ENCODE measurements at regions of chr16 and their contacts with region 1.

Region 1: DNA sequence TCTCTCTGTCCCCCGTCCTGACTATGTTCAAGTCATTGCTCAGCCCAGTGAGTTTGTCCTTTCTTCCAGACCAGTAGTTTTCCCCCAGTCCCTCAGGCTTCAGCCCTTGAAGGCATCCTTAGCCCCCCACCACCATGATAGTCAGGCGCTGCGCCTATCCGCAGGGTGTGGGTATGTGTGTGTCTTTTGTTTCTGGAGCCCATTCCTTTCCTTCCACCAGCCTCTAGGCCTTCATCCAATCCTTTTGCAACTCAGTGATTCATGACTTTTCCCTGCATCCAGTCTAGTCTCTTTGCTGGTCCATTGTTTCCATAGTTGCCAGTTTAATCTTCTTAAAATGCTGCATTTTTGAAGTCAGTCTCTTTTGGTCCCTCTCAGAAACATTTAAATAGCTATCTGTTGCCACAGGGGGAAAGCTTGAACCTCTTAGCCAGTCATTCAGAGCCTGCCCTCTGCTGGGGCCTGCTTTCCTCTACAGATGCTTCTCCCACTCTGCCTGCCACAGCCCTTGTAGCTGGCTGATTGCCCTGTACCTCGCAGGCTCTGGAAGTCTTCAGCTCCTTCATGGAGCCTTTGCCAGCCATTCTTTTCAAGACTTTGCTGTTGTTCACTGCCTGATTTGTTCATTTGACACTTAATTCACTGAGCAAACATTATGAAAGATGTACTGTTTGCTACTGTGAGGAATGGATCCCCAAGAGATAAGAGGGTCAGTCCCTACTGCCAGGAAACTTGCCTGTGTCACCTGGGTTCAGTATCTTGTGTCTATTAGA is 55.9 kb upstream of the ADCY7 start:
- DNase-seq: no peak
- ATAC-seq: peak; percentile 83
- H3K4me3 Mint-ChIP-seq: no peak overlapping the region
- H3K27ac Mint-ChIP-seq: peak overlapping the region; percentile 59
- H3K4me1 Mint-ChIP-seq: peaks cover 35% of the 10 kb centered on the region
- H3K27me3 Mint-ChIP-seq: no peaks in the 10 kb centered on the region
- CTCF ChIP-seq: no peak

Region 2: DNA sequence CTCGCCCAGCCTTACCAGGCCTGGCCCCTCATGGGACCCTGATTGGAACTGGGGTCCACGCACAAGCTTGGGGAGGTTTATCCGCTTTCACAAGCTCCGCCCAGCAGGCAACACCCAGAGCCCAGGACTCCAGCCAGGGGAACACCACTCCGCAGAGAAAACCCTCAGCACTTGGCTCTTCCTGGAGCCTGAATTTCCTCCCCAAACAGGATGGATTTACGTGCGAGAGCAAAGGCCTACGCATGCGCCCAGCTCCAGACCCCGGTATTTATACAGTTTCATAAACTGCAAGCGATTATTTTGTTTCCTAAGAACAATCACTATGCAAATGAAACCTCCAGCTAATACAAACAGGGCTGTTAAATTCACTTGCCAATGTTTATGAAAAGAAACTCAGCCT is 377.4 kb before region 1 on chr16:
- CTCF ChIA-PET with region 1: no interaction called
- POLR2A ChIA-PET with region 1: no interaction called
- intact Hi-C with region 1: no loop called
- DNase-seq: no peak
- ATAC-seq: no peak
- H3K4me3 Mint-ChIP-seq: no peak overlapping the region
- H3K27ac Mint-ChIP-seq: no peak overlapping the region
- H3K4me1 Mint-ChIP-seq: peaks cover 14% of the 10 kb centered on the region
- H3K27me3 Mint-ChIP-seq: peaks cover 18% of the 10 kb centered on the region
- CTCF ChIP-seq: no peak

Region 3: GRCh38 chr16:50024684-50025536 is 185.5 kb before region 1 on chr16 and contains the start of gene CNEP1R1:
- CTCF ChIA-PET with region 1: interaction called, 76 read pairs
- POLR2A ChIA-PET with region 1: interaction called, 10 read pairs
- intact Hi-C with region 1: loop called (anchors 1 kb)
- DNase-seq: peak; percentile 87
- ATAC-seq: peak; percentile 95
- H3K4me3 Mint-ChIP-seq: peak within 1 kb of the TSS; percentile 96
- H3K27ac Mint-ChIP-seq: peak within 1 kb of the TSS; percentile 83
- H3K4me1 Mint-ChIP-seq: peaks cover 19% of the 10 kb centered on the region
- H3K27me3 Mint-ChIP-seq: peaks cover 6% of the 10 kb centered on the region
- CTCF ChIP-seq: peak; percentile 82
- total RNA-seq, gene CNEP1R1: 22.1 and 31.0 TPM in 2 replicates

Region 4: DNA sequence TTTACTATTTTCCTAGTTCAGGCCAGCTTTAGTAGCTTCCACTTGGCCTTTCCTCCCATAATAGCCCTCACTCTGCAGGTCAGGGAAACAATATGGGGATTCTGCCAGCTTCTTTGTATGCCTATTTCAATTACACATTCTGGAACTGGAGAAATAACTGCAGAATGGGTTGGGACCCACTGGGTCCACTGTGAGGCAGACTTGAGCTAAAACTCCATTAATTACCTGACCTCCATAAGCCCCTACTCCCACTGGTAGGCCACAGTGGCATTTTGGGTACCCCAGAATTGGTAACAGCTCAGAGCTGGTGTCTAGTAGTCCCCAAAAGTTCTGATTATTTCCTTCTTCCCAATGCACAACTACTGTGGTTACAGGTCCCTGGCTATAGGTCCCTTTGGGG is 74.1 kb before region 1 on chr16:
- CTCF ChIA-PET with region 1: interaction called, 10 read pairs
- POLR2A ChIA-PET with region 1: no interaction called
- intact Hi-C with region 1: no loop called
- DNase-seq: no peak
- ATAC-seq: no peak
- H3K4me3 Mint-ChIP-seq: no peak overlapping the region
- H3K27ac Mint-ChIP-seq: no peak overlapping the region
- H3K4me1 Mint-ChIP-seq: no peaks in the 10 kb centered on the region
- H3K27me3 Mint-ChIP-seq: no peaks in the 10 kb centered on the region
- CTCF ChIP-seq: no peak

Region 5: GRCh38 chr16:50245417-50246298 is 35.2 kb after region 1 on chr16:
- CTCF ChIA-PET with region 1: no interaction called
- POLR2A ChIA-PET with region 1: no interaction called
- intact Hi-C with region 1: no loop called
- DNase-seq: peak; percentile 65
- ATAC-seq: peak; percentile 89
- H3K4me3 Mint-ChIP-seq: peak overlapping the region; percentile 77
- H3K27ac Mint-ChIP-seq: no peak overlapping the region
- H3K4me1 Mint-ChIP-seq: peaks cover 5% of the 10 kb centered on the region
- H3K27me3 Mint-ChIP-seq: peaks cover 3% of the 10 kb centered on the region
- CTCF ChIP-seq: no peak

Region 6: DNA sequence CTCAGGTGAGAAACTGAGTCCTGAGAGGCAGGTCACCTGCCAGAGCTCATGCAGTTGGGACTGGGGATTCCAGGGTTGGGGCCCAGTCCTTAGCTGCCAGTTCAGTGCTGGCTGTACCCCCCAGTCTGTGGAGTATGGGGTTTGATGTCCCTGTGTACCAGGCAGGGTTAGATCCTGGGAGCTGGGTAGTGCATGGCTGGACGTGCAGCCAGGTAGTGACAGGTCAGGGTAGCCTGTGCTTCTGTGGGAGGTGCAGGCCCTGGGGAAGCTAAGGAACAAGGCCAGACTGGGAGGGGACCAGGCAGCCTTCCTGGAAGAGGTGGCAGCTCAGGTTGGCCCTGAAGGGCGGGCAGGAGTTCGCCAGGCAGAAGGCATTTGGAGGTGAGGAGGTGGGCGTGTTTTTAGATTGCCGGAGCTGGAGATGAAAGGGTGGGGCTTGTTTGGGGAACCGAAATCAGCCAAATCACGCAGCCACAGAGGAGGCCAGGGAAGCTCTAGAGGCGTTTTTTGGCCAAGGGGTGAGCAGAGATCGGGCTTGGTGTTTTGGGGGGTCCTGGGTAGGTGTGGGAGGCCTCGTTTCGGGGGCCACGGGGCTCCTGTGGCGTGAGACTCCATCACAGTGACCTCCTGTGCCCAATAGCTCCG is 63.4 kb after region 1 on chr16:
- CTCF ChIA-PET with region 1: interaction called, 3 read pairs
- POLR2A ChIA-PET with region 1: interaction called, 3 read pairs
- intact Hi-C with region 1: loop called (anchors 2 kb)
- DNase-seq: no peak
- ATAC-seq: peak; percentile 82
- H3K4me3 Mint-ChIP-seq: peak overlapping the region; percentile 99
- H3K27ac Mint-ChIP-seq: peak overlapping the region; percentile 100
- H3K4me1 Mint-ChIP-seq: peaks cover 92% of the 10 kb centered on the region
- H3K27me3 Mint-ChIP-seq: no peaks in the 10 kb centered on the region
- CTCF ChIP-seq: no peak

Region 7: DNA sequence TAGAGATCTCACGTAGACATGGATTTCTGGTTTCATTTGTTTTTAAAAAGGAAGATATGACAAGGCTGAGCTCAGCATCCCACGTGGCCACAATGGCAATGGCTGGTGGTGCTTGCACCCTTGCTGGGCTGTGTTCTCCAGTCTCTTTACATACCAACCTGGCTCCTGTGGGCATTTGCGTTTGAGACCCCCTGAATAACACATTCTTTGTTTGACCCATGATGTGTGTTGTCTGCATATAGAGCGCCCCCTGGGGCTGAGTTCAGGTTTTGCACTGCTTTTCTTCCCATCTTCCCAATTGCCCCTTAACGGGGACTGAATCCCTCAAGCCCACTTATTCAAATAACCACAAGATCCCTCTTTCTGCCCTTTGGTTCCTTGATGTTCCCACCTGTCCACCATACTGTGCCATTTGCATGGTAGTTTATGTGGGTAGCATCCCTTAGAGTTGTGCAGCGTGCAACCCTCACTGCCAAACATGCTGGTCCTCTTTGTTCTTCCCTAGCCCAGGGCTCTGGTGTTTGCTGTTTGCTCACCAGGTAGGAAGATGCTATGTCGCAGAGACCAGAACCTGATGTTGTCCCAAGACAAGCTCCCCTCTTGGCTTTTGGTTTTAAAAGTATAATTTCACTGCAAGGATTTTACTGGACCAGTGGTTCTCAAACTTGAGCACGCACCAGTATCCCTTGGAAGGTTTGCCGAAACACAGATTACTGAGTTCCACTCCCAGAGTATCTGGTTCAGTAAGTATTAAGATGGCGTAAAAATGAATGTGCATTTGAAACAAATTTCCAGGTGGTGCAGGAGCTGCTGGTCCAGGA is 299.3 kb after region 1 on chr16:
- CTCF ChIA-PET with region 1: interaction called, 3 read pairs
- POLR2A ChIA-PET with region 1: no interaction called
- intact Hi-C with region 1: loop called (anchors 10 kb)
- DNase-seq: no peak
- ATAC-seq: no peak
- H3K4me3 Mint-ChIP-seq: no peak overlapping the region
- H3K27ac Mint-ChIP-seq: no peak overlapping the region
- H3K4me1 Mint-ChIP-seq: no peaks in the 10 kb centered on the region
- H3K27me3 Mint-ChIP-seq: peaks cover 9% of the 10 kb centered on the region
- CTCF ChIP-seq: no peak

Region 8: DNA sequence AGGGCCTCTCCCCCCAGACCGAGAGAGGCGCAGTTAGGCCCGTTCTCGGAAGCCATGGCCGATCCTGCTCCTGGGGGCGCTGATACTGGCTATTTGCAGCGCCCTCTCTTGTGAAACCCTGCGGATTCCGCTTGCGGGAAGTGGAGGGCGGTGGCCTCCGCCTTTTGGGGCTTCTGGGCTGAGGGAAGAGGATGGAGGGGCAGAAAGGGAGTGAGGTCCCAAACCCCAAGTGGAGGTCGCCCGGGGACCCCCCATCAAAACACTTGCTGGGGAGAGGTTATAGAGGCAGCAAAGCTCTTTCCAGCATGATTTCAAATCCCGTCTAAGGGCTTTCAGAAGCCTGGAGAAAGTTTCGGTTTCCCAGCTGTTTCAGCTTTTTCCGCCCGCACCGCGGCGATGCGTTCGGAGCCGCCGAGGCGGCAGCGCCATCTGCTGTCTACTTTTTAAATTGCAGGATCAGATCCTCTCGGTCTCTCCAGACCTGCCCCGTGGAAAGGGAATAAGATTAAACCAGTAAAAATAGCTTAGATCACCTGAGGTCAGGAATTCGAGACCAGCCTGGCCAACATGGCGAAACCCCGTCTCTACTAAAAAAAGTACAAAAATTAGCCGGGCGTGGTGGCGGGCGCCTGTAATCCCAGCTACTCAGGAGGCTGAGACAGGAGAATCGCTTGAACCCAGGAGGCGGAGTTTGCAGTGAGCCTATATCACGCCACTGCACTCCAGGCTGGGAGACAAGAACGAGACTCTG is 454.9 kb after region 1 on chr16:
- CTCF ChIA-PET with region 1: interaction called, 39 read pairs
- POLR2A ChIA-PET with region 1: interaction called, 3 read pairs
- intact Hi-C with region 1: loop called (anchors 1 kb)
- DNase-seq: peak; percentile 68
- ATAC-seq: peak; percentile 70
- H3K4me3 Mint-ChIP-seq: peak overlapping the region; percentile 81
- H3K27ac Mint-ChIP-seq: peak overlapping the region; percentile 65
- H3K4me1 Mint-ChIP-seq: peaks cover 23% of the 10 kb centered on the region
- H3K27me3 Mint-ChIP-seq: no peaks in the 10 kb centered on the region
- CTCF ChIP-seq: no peak